ENCODE measurements at regions of chr18 and their contacts with region 1.

Region 1: DNA sequence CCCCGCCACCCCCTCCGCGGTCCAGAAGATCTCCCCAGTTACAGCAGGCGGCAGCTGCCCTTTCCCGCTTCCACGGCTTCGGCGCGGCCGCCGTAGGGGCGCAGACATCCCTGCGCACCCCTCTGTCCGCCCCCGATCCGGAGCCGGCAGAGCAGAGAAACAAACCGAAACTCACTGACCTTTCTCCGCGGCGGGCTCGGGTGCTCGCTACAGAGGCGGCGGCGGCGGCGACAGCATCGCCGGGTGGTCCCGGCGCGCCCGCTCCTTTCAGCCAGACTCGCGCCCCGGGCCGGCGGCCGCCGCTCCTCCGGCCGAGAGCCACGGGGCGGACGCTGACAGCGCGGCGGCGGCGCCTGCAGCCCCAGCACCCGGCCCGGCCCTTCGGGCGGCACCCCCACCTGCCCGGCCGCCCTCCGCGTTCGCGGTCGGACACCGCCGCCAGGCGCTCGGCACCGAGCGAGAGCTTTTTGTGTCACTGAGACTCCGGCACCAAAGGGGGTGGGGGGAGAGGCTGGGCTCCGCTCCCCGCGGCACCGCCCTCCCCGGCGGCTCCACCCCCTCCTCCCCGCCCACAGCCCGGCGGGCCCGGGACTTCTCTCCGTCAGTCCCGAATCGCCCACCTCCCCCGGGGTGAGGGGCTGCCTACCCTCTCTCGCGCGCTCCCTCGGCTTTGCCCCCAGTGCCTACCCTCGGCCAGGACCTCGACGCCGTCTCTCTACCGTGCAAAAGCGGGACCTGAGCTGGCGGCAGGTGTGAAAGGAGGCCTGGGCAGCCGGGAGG is 1.4 kb upstream of the RNF152 start:
- DNase-seq: peak; percentile 83
- ATAC-seq: peak; percentile 93
- H3K4me3 Mint-ChIP-seq: peak overlapping the region; percentile 73
- H3K27ac Mint-ChIP-seq: no peak overlapping the region
- H3K4me1 Mint-ChIP-seq: peaks cover 12% of the 10 kb centered on the region
- H3K27me3 Mint-ChIP-seq: peaks cover 39% of the 10 kb centered on the region

Region 2: DNA sequence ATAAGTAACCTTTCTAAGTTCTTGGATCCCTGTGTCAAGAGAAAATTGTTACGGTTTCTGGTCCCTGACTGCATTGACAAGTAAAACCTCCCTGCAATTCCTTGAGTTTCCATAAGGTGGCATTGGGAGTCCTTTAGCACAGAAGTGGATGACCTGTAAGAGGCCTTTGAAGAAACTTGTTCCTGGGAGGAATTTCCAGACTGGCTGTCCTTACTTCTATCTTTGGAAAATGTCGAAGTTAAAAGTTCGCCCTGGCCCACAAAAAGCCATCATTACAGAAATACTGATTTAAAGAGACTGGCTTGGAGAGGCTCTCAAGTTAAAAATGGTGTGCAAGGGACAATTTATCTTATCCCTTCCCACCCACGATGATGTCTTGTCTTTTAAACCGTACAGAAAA is 342.6 kb before region 1 on chr18:
- CTCF ChIA-PET with region 1: no interaction called
- POLR2A ChIA-PET with region 1: no interaction called
- intact Hi-C with region 1: loop called in 1 of 2 experiments (anchors 5 kb)
- DNase-seq: peak; percentile 10
- ATAC-seq: no peak
- H3K4me3 Mint-ChIP-seq: no peak overlapping the region
- H3K27ac Mint-ChIP-seq: no peak overlapping the region
- H3K4me1 Mint-ChIP-seq: peaks cover 11% of the 10 kb centered on the region
- H3K27me3 Mint-ChIP-seq: peaks cover 10% of the 10 kb centered on the region

Region 3: DNA sequence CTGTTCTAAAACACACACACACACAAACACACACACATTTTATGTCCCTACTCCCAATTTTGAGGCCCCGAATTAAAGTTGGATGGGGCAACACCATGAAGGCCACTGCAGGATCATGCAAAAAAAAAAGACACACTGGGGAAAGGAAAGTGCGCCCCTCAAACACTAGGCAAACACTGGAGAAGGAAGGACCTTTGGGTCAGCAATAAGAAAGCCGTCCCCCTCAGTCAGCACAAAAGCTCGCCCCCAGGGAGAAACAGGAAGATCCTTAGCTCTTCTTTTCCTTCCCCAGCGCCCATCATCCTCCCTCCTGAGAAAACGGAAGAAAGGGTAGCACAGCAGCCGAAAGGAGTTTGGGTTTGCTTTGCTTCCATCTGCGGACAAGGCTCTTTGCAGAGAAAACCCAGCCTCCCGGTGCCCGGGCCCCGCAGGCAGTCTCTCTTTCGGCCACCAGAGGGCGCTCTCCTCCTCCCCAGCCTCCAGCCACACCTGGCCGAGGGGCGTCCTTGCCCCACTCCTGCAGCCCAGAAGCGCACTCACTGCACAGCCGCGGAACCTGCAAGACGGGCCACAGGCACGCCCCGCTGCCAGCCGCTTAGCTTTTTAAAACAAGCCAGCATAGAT is 312.5 kb before region 1 on chr18:
- CTCF ChIA-PET with region 1: interaction called, 3 read pairs
- POLR2A ChIA-PET with region 1: no interaction called
- intact Hi-C with region 1: loop called in 1 of 2 experiments (anchors 5 kb)
- DNase-seq: peak; percentile 80
- ATAC-seq: peak; percentile 78
- H3K4me3 Mint-ChIP-seq: no peak overlapping the region
- H3K27ac Mint-ChIP-seq: no peak overlapping the region
- H3K4me1 Mint-ChIP-seq: peaks cover 6% of the 10 kb centered on the region
- H3K27me3 Mint-ChIP-seq: peaks cover 31% of the 10 kb centered on the region

Region 4: DNA sequence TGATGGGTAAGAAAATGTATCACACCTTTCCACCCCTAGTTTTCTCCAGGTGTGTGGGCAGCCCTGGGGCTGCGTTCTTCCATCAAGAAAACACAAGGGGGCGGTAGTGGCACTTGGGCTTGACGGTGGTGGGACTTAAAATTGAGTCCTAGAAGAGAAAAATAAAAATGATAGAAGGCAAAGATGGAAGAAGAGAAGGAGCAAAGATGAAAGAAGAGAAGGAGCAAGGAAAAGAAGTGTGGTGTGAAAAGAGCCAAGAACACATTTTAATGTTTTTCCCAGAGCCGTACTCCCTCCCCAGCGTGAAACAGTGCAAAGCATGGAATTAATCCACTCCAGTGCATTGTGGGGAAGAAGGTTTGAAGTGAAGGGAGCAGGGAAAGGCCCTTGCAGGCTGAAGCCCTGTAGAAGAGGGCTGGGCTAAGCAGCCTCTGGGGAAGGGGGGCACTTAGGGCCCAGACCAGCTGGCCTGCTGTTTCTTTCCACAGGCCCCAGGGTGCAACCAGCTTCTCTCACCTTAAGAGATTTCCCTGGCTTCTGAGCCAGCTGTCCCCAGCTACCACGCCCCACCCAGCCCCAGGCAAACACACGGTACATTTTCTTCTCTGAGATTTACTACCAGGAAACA is 258.1 kb before region 1 on chr18:
- CTCF ChIA-PET with region 1: no interaction called
- POLR2A ChIA-PET with region 1: interaction called, 6 read pairs
- intact Hi-C with region 1: loop called in 1 of 2 experiments (anchors 10 kb)
- DNase-seq: peak; percentile 65
- ATAC-seq: peak; percentile 60
- H3K4me3 Mint-ChIP-seq: no peak overlapping the region
- H3K27ac Mint-ChIP-seq: no peak overlapping the region
- H3K4me1 Mint-ChIP-seq: no peaks in the 10 kb centered on the region
- H3K27me3 Mint-ChIP-seq: peaks cover 8% of the 10 kb centered on the region

Region 5: GRCh38 chr18:61975526-61976326 is 81.6 kb after region 1 on chr18:
- CTCF ChIA-PET with region 1: no interaction called
- POLR2A ChIA-PET with region 1: no interaction called
- intact Hi-C with region 1: loop called in 1 of 2 experiments (anchors 2 kb)
- DNase-seq: peak; percentile 27
- ATAC-seq: peak; percentile 78
- H3K4me3 Mint-ChIP-seq: no peak overlapping the region
- H3K27ac Mint-ChIP-seq: peak overlapping the region; percentile 55
- H3K4me1 Mint-ChIP-seq: peaks cover 28% of the 10 kb centered on the region
- H3K27me3 Mint-ChIP-seq: no peaks in the 10 kb centered on the region